ENCODE measurements at regions of chr5 and their contacts with region 1.

Region 1: GRCh38 chr5:90409318-90410177 is at the start of gene CETN3:
- DNase-seq: peak; percentile 91
- H3K4me3 Mint-ChIP-seq: no peak within 1 kb of the TSS
- H3K27ac Mint-ChIP-seq: no peak within 1 kb of the TSS
- H3K4me1 Mint-ChIP-seq: peaks cover 19% of the 10 kb centered on the region
- H3K27me3 Mint-ChIP-seq: no peaks in the 10 kb centered on the region
- total RNA-seq, gene CETN3: 33.4 to 34.7 TPM

Region 2: DNA sequence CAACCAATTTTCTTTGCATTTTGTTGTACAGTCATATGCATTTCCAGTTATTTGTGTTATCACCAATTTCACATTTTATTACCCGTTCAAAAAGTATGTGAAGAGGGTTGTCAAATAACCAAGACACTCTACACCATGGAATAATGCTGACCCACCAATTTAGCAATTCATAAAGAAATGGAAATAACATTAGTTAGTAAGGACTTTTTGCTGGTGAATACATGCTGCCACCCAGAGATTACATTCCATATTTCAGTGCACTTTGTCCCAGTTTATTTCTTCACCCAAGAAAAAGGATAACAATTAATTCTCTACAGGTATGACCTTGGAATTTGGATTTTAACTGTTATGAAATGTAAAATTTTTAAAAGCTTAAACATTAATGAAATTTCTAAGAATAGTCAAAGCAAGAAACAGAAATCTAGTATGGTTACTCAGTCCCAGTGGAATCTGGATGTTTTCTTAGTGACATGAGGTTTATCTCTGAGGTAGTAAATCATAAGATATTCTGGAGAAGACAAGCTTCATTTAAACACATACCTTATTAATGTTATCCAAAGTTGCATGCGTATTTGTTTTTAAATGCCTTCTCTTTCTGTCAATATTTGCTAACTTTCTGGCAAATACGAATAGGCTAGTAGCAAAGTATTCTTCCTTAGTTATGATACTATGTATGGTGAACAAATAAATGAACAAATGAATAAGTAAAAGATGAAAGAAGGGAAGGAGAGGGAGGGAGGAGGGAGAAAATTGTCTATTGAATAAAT is 100.6 kb before region 1 on chr5:
- CTCF ChIA-PET with region 1: no interaction called
- POLR2A ChIA-PET with region 1: no interaction called
- DNase-seq: no peak
- H3K4me3 Mint-ChIP-seq: no peak overlapping the region
- H3K27ac Mint-ChIP-seq: no peak overlapping the region
- H3K4me1 Mint-ChIP-seq: no peaks in the 10 kb centered on the region
- H3K27me3 Mint-ChIP-seq: no peaks in the 10 kb centered on the region

Region 3: GRCh38 chr5:90398726-90399125 is 10.8 kb before region 1 on chr5:
- CTCF ChIA-PET with region 1: interaction called, 4 read pairs
- POLR2A ChIA-PET with region 1: interaction called, 28 read pairs
- DNase-seq: no peak
- H3K4me3 Mint-ChIP-seq: no peak overlapping the region
- H3K27ac Mint-ChIP-seq: no peak overlapping the region
- H3K4me1 Mint-ChIP-seq: peaks cover 3% of the 10 kb centered on the region
- H3K27me3 Mint-ChIP-seq: no peaks in the 10 kb centered on the region

Region 4: GRCh38 chr5:90421136-90421535 is 11.6 kb after region 1 on chr5:
- CTCF ChIA-PET with region 1: no interaction called
- POLR2A ChIA-PET with region 1: interaction called, 14 read pairs
- DNase-seq: no peak
- H3K4me3 Mint-ChIP-seq: no peak overlapping the region
- H3K27ac Mint-ChIP-seq: no peak overlapping the region
- H3K4me1 Mint-ChIP-seq: no peaks in the 10 kb centered on the region
- H3K27me3 Mint-ChIP-seq: peaks cover 21% of the 10 kb centered on the region

Region 5: DNA sequence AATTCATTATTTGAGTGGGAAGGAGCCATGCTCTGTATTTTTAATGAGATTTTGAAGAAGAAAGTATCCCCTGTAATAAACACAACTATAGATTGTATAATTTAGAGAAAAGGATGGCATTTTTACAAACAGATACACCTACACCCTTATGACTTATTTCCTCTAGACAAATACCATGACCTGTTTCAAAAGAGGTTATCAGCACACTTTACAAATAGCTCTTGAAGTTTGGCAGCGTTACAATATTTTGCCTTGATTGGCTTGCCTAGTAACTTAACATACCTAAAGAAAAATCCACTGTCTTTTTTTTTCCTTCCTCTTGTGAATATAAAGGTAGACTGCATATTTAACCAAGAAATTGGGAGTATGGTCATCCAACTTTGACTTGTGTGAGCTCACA is 28.6 kb after region 1 on chr5:
- CTCF ChIA-PET with region 1: interaction called, 6 read pairs
- POLR2A ChIA-PET with region 1: interaction called, 21 read pairs
- DNase-seq: no peak
- H3K4me3 Mint-ChIP-seq: no peak overlapping the region
- H3K27ac Mint-ChIP-seq: no peak overlapping the region
- H3K4me1 Mint-ChIP-seq: peaks cover 9% of the 10 kb centered on the region
- H3K27me3 Mint-ChIP-seq: peaks cover 1% of the 10 kb centered on the region

Region 6: DNA sequence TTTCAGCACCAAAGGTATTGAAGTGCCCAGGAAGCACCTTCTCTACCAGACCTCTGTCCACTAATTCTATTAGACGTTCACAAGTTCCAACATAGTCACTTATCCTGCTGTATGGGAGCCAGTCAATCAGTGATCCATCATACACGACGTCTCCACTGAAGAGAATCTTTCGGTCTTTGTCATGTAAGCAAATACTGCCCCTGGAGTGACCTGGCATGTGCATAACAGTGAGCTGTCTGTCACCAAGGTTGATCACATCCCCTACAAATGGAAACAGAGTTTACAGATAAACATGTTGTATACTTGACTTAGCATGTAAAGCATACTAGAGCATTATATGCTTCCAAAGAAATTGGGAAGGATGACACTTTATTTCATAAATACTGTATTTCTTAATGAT is 51.7 kb after region 1 on chr5:
- CTCF ChIA-PET with region 1: no interaction called
- POLR2A ChIA-PET with region 1: no interaction called
- DNase-seq: no peak
- H3K4me3 Mint-ChIP-seq: no peak overlapping the region
- H3K27ac Mint-ChIP-seq: no peak overlapping the region
- H3K4me1 Mint-ChIP-seq: no peaks in the 10 kb centered on the region
- H3K27me3 Mint-ChIP-seq: no peaks in the 10 kb centered on the region

Region 7: DNA sequence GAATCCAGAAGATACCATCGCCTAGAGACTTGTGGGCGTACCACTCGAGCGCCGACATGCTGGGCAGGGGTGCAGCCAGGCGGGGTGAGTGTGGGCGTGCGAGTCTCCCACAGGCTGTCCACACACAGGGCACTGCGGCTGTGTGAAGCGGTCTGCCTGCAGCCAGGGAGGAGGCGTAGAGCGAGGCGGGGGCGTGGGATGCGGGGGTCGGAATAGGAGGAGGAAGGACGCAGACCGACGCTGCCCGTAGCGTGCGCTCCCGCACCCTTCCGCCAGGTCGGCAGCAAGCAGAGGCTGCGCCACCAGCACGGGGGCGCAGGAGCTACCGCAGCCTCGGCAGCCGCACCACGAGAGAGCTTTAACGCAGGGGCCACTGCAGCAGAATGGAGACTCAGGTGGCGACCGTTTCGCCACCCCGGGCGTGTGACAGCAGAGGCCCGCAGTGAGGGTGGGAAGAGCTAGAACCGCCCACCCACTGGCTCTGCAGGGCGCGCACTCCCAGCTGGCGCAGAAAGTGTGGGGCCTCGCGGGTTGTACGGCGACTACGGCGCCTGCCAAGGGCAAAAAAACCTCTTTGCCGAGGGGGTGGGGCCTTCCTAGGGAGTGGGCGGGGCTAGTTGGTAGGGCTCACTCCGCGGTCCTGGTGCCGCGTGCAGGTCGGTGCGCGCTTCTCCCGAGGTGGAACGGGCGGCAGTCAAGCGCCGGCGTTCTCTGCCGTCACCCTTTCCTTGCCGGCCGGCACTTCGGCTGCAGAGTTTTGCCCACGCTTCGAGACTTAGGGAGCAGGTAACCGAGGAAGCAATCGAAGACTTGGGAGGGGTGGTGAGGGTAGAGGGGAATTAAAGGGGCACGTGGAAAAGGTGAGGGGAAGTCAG is 64.9 kb after region 1 on chr5 and contains the starts of genes MBLAC2 and POLR3G:
- CTCF ChIA-PET with region 1: interaction called, 10 read pairs
- POLR2A ChIA-PET with region 1: interaction called, 55 read pairs
- DNase-seq: peak; percentile 94
- H3K4me3 Mint-ChIP-seq: peak within 1 kb of the TSS; percentile 89
- H3K27ac Mint-ChIP-seq: peak within 1 kb of the TSS; percentile 89
- H3K4me1 Mint-ChIP-seq: peaks cover 27% of the 10 kb centered on the region
- H3K27me3 Mint-ChIP-seq: no peaks in the 10 kb centered on the region
- total RNA-seq, gene MBLAC2: 3.9 to 4.9 TPM
- total RNA-seq, gene POLR3G: 2.8 to 4.2 TPM

Region 8: GRCh38 chr5:90529194-90529938 is 119.8 kb after region 1 on chr5 and contains the start of gene LYSMD3:
- CTCF ChIA-PET with region 1: interaction called, 12 read pairs
- POLR2A ChIA-PET with region 1: interaction called, 37 read pairs
- DNase-seq: peak; percentile 98
- H3K4me3 Mint-ChIP-seq: peak within 1 kb of the TSS; percentile 87
- H3K27ac Mint-ChIP-seq: peak within 1 kb of the TSS; percentile 87
- H3K4me1 Mint-ChIP-seq: peaks cover 27% of the 10 kb centered on the region
- H3K27me3 Mint-ChIP-seq: peaks cover 22% of the 10 kb centered on the region
- total RNA-seq, gene LYSMD3: 20.6 to 22.5 TPM

Measured in activated CD4-positive, alpha-beta memory T cell treated with anti-CD3 and anti-CD28 coated beads, Interleukin-2, amount 10 ng/mL, durations not matched to agents 7 days and 5 days (primary cell).